ENCODE measurements at regions of chr12 and their contacts with region 1.

Region 1: GRCh38 chr12:27779920-27780611 is at the starts of genes KLHL42 and MANSC4:
- DNase-seq: peak; percentile 67
- ATAC-seq: peak; percentile 78
- H3K4me3 Mint-ChIP-seq: peak within 1 kb of the TSS; percentile 83
- H3K27ac Mint-ChIP-seq: peak within 1 kb of the TSS; percentile 84
- H3K4me1 Mint-ChIP-seq: peaks cover 33% of the 10 kb centered on the region
- H3K27me3 Mint-ChIP-seq: no peaks in the 10 kb centered on the region
- CTCF ChIP-seq: no peak
- total RNA-seq, gene KLHL42: 10.2 to 11.3 TPM
- total RNA-seq, gene MANSC4: not detected

Region 2: DNA sequence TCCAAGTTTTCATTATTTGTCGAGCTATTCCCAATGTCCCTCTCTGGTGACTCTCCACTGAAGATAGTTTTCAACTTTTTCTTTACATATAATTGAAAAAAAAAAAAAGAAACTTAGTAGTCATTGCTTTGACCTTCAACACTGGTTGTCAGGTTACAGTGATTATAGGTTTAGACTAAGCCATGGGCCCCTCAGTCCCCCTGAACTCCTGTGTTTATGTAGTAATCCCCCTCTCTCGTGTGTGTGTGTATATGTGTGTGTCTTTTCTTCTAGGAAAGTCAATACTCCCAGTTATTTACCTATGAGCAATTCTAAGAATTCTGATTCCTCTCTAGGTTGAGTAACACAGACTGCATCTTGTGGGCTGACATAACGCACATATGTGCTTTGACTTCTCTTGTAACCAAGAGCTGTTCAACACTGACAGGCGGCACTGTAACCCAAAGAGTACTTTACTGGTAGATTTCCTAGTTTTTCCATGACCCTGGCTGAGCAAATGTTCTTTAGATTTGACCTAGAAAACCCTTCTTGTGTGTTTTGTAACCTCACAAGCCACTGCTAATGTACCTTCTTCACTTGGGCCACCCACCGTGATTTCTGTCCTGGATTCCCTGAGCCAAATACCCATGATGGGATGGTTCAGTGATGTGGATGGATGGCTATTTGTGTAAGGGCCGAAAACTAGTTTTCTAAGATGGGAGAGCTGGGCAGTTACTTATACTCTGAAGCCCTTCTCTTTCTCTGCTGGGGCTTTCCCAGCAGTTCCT is 14.9 kb after region 1 on chr12:
- CTCF ChIA-PET with region 1: interaction called, 8 read pairs
- POLR2A ChIA-PET with region 1: interaction called, 15 read pairs
- intact Hi-C with region 1: no loop called
- DNase-seq: no peak
- ATAC-seq: peak; percentile 82
- H3K4me3 Mint-ChIP-seq: no peak overlapping the region
- H3K27ac Mint-ChIP-seq: peak overlapping the region; percentile 81
- H3K4me1 Mint-ChIP-seq: peaks cover 25% of the 10 kb centered on the region
- H3K27me3 Mint-ChIP-seq: no peaks in the 10 kb centered on the region
- CTCF ChIP-seq: no peak